H1 (cell line): ENCODE measurements at regions of chr1 and their contacts with region 1.

Region 1: DNA sequence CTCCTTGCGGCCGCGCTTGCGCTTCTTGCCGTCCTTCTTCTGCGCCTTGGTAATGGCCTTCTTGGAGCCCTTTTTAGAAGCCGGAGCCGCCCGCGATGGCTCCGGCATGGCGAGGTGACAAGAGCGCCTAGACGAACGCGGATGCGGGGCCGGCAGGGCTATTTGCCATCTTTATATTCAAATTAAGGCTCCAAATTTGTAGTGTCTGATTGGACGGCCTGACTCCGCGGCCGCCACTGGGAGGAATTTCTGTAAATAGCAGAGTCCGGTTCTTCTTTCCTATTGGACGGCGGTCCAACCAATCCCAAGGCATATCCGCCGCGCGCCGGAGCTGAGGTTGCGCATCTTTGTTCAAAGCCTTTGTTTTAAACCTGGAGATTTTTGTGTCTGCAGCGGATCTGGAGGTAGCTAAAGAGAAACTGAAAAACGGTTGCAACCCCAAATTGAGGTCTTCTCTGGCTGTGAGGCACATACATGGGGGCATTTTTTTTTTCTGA is 22.6 kb upstream of the RNF187 start:
- DNase-seq: peak in 1 of 2 experiments; percentile 84
- H3K4me3 ChIP-seq: peak overlapping the region; percentile 57 to 77 (median 69)
- H3K27ac ChIP-seq: no peak overlapping the region
- H3K4me1 ChIP-seq: peaks cover 0 to 20% (median 5%) of the 10 kb centered on the region in 4 experiments; a peak in 5 of 7 replicates
- H3K27me3 ChIP-seq: peaks cover 4 to 44% (median 26%) of the 10 kb centered on the region in 4 experiments
- CTCF ChIP-seq: no peak; a peak in 1 of 4 replicates
- EP300 ChIP-seq: no peak
- POLR2A ChIP-seq: peak in 1 of 2 experiments; percentile 41; a peak in 1 of 3 replicates
- RAD21 ChIP-seq: no peak

Region 2: DNA sequence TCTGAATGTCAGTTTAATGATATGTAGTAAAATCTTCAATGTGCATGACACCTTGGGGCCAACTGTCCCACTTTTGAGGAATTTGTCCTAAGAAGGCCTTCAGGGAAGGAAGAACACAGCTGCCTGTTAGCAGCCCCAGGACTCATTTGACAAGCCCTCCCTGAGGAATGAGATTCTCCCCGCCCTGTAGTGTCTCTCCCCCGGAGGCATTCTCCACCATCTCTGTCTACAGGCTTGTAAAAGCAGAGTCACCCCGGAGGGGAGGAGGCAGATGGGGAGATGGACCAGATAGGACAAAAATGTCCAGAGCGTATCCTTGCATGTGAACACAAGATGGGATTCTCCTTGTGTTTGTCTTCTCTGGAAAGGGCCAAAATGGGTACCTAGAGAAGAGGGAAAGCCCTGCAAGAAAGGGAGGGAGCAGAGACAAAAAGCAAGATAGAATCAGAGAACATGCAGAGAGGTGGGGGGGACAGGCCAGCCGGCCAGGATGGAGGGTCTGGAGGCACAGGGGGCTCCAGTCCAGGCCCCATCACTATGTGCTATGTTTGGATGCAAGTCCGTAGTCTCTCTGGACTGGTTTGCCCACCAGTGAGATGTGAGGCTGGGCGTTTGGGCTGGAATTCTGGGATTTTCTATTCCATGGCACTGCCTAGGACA is 469.8 kb before region 1 on chr1:
- CTCF ChIA-PET with region 1: no interaction called
- POLR2A ChIA-PET with region 1: no interaction called
- DNase-seq: no peak
- H3K4me3 ChIP-seq: no peak overlapping the region
- H3K27ac ChIP-seq: no peak overlapping the region
- H3K4me1 ChIP-seq: no peaks in the 10 kb centered on the region
- H3K27me3 ChIP-seq: peaks cover 0 to 5% (median 3%) of the 10 kb centered on the region in 4 experiments; a peak in 4 of 7 replicates
- CTCF ChIP-seq: no peak
- EP300 ChIP-seq: no peak
- POLR2A ChIP-seq: no peak
- RAD21 ChIP-seq: no peak

Region 3: DNA sequence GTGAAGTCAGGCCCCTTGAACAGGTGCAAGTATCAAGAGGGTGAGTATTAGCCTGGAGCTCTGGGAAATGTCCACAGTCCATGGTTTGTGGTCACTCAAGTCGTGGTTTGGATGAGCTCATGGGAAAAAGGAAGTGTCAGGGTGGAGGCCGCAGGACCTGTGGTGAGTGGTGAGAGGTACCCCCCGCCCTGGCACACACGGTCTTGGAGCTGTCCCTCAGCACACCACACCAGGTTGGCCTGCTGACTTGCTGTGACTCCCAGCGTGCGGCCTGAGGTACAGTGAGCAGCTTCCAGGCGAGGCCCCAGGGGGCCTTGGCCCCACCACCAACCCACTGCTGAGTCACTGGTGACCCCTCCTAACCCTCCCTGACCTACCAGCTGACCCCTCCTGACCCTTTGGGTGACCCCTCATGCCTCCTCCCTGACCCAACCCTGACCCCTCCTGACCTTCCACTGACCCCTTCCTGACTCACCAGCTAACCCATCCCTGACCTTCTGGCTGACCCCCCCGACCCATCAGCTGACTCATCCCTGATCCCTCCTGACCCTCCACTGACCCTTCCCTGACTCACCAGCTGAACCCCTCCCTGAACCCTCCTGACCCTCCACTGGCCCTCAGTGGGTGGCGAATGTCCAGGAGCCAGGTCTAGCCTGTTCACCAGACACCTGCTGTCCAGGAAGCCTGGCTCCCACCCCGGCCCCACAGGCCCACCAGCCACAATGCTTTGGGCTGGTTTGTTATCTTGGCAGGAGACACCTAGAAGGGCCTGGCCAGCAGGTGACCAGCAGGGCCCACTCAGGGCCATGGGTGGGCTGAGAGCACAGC is 12.1 kb before region 1 on chr1:
- CTCF ChIA-PET with region 1: interaction called, 117 read pairs
- POLR2A ChIA-PET with region 1: interaction called, 232 read pairs
- DNase-seq: peak in 1 of 2 experiments; percentile 45
- H3K4me3 ChIP-seq: no peak overlapping the region
- H3K27ac ChIP-seq: no peak overlapping the region
- H3K4me1 ChIP-seq: peaks cover 0 to 2% (median 0%) of the 10 kb centered on the region in 4 experiments; a peak in 1 of 7 replicates
- H3K27me3 ChIP-seq: peaks cover 0 to 15% (median 3%) of the 10 kb centered on the region in 4 experiments; a peak in 5 of 7 replicates
- CTCF ChIP-seq: no peak
- EP300 ChIP-seq: no peak
- POLR2A ChIP-seq: no peak; a peak in 1 of 3 replicates
- RAD21 ChIP-seq: no peak

Region 4: GRCh38 chr1:228493141-228494043 is 28.9 kb after region 1 on chr1:
- CTCF ChIA-PET with region 1: interaction called, 3 read pairs
- POLR2A ChIA-PET with region 1: interaction called, 82 read pairs
- DNase-seq: no peak
- H3K4me3 ChIP-seq: no peak overlapping the region
- H3K27ac ChIP-seq: no peak overlapping the region
- H3K4me1 ChIP-seq: peaks cover 0 to 6% (median 5%) of the 10 kb centered on the region in 4 experiments; a peak in 6 of 7 replicates
- H3K27me3 ChIP-seq: no peaks in the 10 kb centered on the region
- CTCF ChIP-seq: peak; percentile 25 to 35 (median 26); a peak in 3 of 4 replicates
- EP300 ChIP-seq: no peak
- POLR2A ChIP-seq: no peak
- RAD21 ChIP-seq: peak; percentile 40 to 51